BJ (cell line): ENCODE measurements at regions of chr22 and their contacts with region 1.

Region 1: DNA sequence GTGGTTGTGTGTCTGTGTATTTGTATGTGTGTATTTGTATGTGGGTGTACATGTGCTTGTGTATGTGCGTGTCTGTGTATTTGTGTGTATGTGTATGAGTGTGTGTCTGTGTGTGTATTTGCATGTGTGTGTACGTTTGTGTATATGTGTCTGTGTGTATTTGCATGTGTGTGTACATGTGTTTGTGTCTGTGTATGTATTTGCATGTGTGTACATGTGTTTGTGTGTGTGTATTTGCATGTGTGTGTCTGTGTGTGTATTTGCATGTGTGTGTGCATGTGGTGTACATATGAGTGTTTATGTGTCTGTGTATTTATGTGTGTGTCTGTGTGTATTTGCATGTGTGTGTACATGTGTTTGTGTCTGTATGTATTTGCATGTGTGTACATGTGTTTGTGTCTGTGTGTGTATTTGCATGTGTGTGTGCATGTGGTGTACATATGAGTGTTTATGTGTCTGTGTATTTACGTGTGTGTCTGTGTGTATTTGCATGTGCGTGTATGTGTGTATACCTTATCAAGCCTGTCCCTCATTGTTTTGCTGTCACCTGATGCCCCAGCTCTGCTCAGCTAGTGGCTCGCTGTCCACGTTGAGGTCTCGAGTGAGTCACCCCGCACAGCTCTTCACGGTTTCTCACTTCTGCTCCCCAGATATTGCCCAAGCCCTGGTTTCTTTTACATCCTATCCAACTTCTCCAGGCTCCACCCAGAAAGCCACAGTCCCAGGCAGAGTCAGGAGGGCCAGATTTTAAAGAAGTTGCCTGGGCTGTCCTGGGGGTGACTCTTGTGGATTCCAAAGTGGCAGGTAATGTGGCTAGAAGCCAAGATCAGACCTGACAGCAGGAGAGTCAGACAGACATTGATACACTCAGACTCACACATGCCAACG is 15.1 kb downstream of the MB start:
- DNase-seq: no peak
- H3K4me3 ChIP-seq: no peak overlapping the region
- H3K27me3 ChIP-seq: peaks cover 2% of the 10 kb centered on the region
- CTCF ChIP-seq: no peak

Region 2: DNA sequence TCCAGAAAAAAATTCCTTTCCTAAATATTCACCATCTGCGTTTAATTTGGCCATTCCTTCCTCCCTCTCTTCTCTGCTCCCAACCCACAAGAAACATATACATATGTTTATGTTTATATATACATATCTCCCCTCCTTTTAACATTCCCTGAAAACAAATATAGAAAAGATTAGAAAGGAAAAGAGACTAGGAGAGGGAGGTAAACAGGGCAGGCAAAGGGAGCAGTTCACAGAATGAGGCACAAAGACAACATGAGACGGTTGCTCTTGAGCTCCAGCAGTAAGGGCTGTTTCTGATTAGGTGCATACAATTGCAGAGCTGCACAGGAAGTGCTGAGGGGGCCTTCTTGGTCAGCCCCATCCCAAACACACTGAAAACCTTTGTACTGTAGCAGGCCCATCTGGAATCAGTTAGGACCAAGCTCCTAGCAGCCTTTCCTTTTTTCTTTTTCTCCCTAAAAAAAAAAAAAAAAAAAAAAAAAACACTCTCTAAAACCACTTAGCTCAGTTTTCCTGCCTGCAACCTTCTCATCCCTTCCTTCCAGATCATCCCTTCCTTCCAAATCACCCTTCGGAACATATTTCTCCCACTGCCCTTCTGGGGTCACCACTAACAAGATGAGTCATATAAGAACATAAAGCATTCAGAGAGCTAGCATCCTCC is 369.6 kb after region 1 on chr22:
- CTCF ChIA-PET with region 1: no interaction called
- POLR2A ChIA-PET with region 1: interaction called, 15 read pairs
- DNase-seq: peak; percentile 91
- H3K4me3 ChIP-seq: peak overlapping the region; percentile 13; the same call in 1 of the 2 replicates
- H3K27me3 ChIP-seq: no peaks in the 10 kb centered on the region
- CTCF ChIP-seq: no peak